ENCODE measurements at regions of chr6 and their contacts with region 1.

Region 1: GRCh38 chr6:113879186-113880096 is 22.3 kb downstream of the MARCKS start:
- DNase-seq: peak; percentile 83
- ATAC-seq: peak; percentile 96
- H3K4me3 ChIP-seq: no peak overlapping the region
- H3K27ac ChIP-seq: no peak overlapping the region
- H3K4me1 ChIP-seq: peaks cover 5% of the 10 kb centered on the region; the same call in 1 of the 2 replicates
- H3K27me3 ChIP-seq: no peaks in the 10 kb centered on the region
- CTCF ChIP-seq: peak; percentile 81
- POLR2A ChIP-seq: no peak
- RAD21 ChIP-seq: peak; percentile 86

Region 2: DNA sequence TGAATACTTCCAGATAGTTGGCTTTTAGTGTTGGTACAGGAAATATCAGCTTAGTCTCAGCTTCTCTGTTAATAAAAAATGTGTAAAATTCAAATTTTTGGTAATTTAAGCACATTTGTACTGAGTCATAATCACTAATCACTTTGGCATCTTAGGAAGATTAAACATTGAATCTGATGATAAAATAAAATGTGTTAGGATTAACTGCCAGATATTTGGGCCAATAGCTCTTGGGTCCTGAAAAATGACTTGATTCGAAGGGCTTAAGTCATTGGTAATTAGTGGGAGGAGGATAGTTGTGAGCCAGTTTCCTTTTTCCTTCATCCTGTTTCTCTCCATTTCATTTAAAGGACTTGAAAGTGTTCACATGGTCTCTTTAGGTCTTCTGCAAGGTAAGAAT is 1106.3 kb before region 1 on chr6:
- CTCF ChIA-PET with region 1: no interaction called
- POLR2A ChIA-PET with region 1: no interaction called
- dilution Hi-C with region 1: no loop called
- in situ Hi-C with region 1: loop called (anchors 10 kb)
- intact Hi-C with region 1: no loop called
- DNase-seq: peak; percentile 33
- ATAC-seq: peak; percentile 61
- H3K4me3 ChIP-seq: no peak overlapping the region
- H3K27ac ChIP-seq: no peak overlapping the region
- H3K4me1 ChIP-seq: peaks cover 2% of the 10 kb centered on the region
- H3K27me3 ChIP-seq: no peaks in the 10 kb centered on the region
- CTCF ChIP-seq: no peak
- POLR2A ChIP-seq: no peak
- RAD21 ChIP-seq: no peak

Region 3: GRCh38 chr6:113927001-113927400 is 47.6 kb after region 1 on chr6:
- CTCF ChIA-PET with region 1: no interaction called
- POLR2A ChIA-PET with region 1: no interaction called
- dilution Hi-C with region 1: no loop called
- in situ Hi-C with region 1: no loop called
- intact Hi-C with region 1: no loop called
- DNase-seq: no peak
- ATAC-seq: no peak
- H3K4me3 ChIP-seq: no peak overlapping the region
- H3K27ac ChIP-seq: no peak overlapping the region
- H3K4me1 ChIP-seq: peaks cover 2% of the 10 kb centered on the region; the same call in 1 of the 2 replicates
- H3K27me3 ChIP-seq: no peaks in the 10 kb centered on the region
- CTCF ChIP-seq: no peak
- POLR2A ChIP-seq: no peak
- RAD21 ChIP-seq: no peak

Region 4: GRCh38 chr6:114342826-114343780 is 463.7 kb after region 1 on chr6 and contains the start of gene HS3ST5:
- CTCF ChIA-PET with region 1: no interaction called
- POLR2A ChIA-PET with region 1: no interaction called
- dilution Hi-C with region 1: no loop called
- in situ Hi-C with region 1: no loop called
- intact Hi-C with region 1: no loop called
- DNase-seq: peak; percentile 8
- ATAC-seq: peak; percentile 77
- H3K4me3 ChIP-seq: peak within 1 kb of the TSS; percentile 61
- H3K27ac ChIP-seq: no peak within 1 kb of the TSS
- H3K4me1 ChIP-seq: no peaks in the 10 kb centered on the region; the same call in 1 of the 2 replicates
- H3K27me3 ChIP-seq: peaks cover 27% of the 10 kb centered on the region
- CTCF ChIP-seq: peak; percentile 35
- POLR2A ChIP-seq: no peak
- RAD21 ChIP-seq: peak; percentile 46
- total RNA-seq, gene HS3ST5: not detected in 2 replicates

Measured in IMR-90 (cell line).